HEK293 (cell line): ENCODE measurements at regions of chr2 and their contacts with region 1.

Region 1: DNA sequence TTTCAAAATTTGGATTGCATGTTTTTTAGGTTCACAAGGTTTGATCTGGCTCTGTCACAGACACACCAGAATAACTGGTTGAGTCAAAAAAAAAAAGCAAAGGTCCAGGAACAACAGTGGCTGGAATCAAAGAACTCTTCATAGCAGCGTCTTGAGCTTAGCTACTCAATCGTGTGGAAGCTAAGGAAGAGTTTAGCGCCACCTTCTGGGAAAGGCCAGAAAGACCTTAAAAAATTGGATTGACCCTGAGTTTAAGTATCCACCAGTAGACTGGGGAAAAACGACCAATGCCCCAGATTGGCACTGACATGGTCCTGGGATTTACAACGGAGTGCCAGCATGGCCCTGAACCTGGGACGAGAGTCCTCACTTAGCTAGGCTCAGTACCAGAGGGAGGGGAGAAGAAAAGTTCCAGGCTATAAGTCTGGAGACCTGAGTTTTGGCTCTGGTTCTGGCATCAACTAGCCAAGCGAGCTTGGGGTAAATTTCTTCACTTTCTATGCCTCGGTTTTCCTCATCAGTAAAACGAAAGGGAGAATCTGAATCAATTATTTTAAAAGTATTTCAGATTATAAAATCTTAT is 71.1 kb upstream of the TFCP2L1 start:
- H3K4me3 ChIP-seq: no peak overlapping the region
- H3K27ac ChIP-seq: no peak overlapping the region
- H3K4me1 ChIP-seq: peaks cover 3% of the 10 kb centered on the region; the same call in 1 of the 2 replicates
- CTCF ChIP-seq: peak; percentile 44

Region 2: DNA sequence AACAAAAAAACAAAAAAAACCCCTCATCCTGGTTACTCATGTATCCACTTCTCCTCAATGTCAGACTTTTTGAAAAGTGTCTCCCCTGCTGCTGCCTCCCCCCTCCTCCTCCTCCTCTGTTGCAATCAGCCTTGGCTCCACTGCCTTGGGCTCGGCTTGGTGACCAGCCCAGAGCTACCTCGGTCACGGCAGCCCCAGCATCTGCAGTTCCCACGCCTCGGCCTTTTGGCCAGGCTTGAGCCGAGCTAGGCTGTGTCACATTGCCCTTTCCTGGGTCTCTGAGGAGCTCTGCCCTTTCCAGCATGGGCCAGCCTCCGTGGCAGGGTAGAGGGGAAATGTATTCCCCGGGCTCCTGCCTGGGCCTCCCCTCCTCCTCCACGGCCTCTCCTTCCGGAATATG is 1032.9 kb before region 1 on chr2:
- CTCF ChIA-PET with region 1: no interaction called
- POLR2A ChIA-PET with region 1: no interaction called
- H3K4me3 ChIP-seq: no peak overlapping the region
- H3K27ac ChIP-seq: no peak overlapping the region
- H3K4me1 ChIP-seq: no peaks in the 10 kb centered on the region
- CTCF ChIP-seq: no peak

Region 3: DNA sequence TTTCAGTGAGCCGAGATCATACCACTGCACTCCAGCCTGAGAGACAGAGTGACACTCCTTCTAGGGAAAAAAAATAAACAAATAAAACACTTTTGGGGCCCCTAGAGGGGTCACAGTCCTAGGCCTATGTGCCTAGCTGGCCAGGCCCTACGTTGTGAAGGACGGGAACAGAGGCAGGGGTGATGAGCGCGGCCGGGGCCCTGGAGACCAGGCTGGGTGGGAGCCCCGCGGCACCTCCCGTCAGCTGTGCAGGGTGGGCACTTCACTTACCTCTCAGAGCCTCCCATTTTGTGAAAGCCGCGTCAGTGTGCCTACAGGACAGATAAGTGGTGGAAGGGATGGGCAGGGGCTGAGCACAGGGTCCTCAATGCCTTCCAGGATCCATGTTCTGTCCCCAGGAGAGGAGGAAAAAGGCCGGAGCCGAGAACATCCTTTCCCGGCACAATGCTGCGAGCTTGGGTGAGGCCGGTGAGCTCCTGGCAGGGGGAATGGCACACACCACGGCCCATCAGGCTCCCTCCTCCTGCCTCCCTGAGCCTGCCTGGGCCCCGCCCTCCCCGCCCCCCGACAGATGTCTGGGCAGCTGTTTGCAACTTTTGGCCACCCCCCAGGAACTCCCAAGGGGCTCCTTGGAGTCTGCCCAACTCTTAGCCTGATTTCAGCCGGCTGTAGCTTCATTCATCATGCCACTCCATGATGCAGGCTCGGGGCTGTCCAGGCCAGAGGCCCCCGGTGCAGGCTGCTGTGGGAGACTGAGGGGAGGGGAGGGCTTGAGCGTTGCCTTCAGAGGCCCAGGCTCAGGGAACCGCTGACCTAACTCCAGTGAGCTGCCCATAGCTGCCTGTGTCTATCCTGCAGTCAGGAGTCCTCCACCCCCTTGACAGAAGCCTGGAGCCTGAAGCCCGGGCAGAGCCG is 267.6 kb before region 1 on chr2:
- CTCF ChIA-PET with region 1: interaction called, 128 read pairs
- POLR2A ChIA-PET with region 1: no interaction called
- H3K4me3 ChIP-seq: no peak overlapping the region
- H3K27ac ChIP-seq: no peak overlapping the region
- H3K4me1 ChIP-seq: no peaks in the 10 kb centered on the region
- CTCF ChIP-seq: no peak

Region 4: DNA sequence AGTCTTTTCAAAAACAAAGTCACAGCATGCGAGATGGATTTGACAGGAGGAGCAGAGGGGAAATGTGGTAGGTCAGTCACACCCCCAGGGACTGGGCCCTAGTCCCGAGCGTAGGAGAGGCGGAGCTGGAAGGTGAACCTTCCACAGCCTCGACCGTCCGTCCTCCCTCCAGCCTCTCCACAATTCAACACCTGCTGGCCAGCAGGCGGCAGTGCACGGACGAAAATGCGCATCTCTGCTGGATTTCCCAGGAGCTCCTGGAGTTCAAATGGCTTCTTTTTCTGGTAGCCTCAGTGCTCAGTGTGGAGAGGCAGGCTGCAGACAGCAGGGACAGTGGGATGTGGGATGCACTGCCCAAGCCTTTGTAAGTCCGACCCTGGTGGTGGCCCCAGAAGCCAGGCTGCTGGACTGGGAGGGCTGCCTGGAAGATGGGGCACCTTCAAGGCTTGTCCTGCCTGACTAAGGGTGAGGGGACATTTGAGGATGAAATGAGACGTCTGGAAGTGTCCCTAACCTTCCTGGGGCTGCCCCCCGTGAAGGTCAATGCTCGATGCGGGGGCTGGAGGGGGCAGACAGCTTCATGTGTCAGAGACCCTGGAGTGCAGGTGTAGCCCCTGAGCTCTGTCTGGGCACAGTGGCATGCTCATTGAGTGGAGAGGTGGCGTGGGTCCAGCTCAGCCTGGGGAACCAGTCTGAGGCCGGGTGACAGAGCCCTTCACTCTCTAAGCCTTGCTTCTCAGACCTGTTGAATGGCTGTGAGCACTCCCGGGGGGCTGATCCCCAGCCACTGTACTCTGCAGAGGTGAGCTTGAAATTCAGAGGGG is 260.7 kb before region 1 on chr2:
- CTCF ChIA-PET with region 1: interaction called, 128 read pairs
- POLR2A ChIA-PET with region 1: interaction called, 7 read pairs
- H3K4me3 ChIP-seq: no peak overlapping the region
- H3K27ac ChIP-seq: no peak overlapping the region
- H3K4me1 ChIP-seq: no peaks in the 10 kb centered on the region
- CTCF ChIP-seq: peak; percentile 86

Region 5: DNA sequence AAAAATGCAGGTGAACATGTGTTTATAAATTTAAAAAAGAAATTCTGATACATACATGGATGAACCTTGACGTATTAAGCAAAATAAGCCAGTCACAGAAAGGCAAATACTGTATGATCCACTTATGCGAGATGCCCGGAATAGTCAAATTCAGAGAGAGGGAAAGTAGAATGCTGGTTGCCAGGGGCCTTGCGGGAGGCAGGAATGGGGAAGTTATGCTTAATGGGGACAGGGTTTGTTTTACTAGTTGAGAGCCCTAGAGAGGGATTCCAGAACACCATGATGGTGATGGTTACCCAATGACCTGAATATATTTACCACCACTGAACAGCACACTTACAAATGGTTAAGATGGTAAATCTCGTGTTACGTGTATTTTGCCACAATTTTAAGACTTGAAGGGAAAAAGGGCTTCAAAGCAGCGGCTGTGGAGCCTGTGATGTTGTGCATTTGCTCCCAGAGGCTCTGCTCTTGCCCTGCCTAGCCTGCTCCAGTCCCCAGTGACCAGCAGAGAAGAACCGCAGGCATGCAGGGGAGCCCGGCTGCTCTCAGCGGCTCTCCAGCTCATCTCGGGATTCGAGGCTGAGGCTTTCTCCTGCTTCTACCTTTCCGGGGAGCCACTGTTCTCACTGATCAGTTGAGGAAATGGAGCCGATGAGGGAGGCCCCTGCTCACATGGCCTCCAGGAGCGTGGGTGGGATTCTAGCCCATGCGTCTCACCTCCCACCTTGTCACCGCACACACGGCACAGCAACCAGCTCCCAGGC is 19.4 kb before region 1 on chr2:
- CTCF ChIA-PET with region 1: interaction called, 11 read pairs
- POLR2A ChIA-PET with region 1: no interaction called
- H3K4me3 ChIP-seq: no peak overlapping the region
- H3K27ac ChIP-seq: no peak overlapping the region
- H3K4me1 ChIP-seq: no peaks in the 10 kb centered on the region
- CTCF ChIP-seq: no peak

Region 6: GRCh38 chr2:121345887-121346286 is 10.3 kb before region 1 on chr2:
- CTCF ChIA-PET with region 1: interaction called, 20 read pairs
- POLR2A ChIA-PET with region 1: no interaction called
- H3K4me3 ChIP-seq: no peak overlapping the region
- H3K27ac ChIP-seq: no peak overlapping the region
- H3K4me1 ChIP-seq: no peaks in the 10 kb centered on the region
- CTCF ChIP-seq: no peak